MCF 10A (cell line): ENCODE measurements at regions of chr6 and their contacts with region 1.

Region 1: DNA sequence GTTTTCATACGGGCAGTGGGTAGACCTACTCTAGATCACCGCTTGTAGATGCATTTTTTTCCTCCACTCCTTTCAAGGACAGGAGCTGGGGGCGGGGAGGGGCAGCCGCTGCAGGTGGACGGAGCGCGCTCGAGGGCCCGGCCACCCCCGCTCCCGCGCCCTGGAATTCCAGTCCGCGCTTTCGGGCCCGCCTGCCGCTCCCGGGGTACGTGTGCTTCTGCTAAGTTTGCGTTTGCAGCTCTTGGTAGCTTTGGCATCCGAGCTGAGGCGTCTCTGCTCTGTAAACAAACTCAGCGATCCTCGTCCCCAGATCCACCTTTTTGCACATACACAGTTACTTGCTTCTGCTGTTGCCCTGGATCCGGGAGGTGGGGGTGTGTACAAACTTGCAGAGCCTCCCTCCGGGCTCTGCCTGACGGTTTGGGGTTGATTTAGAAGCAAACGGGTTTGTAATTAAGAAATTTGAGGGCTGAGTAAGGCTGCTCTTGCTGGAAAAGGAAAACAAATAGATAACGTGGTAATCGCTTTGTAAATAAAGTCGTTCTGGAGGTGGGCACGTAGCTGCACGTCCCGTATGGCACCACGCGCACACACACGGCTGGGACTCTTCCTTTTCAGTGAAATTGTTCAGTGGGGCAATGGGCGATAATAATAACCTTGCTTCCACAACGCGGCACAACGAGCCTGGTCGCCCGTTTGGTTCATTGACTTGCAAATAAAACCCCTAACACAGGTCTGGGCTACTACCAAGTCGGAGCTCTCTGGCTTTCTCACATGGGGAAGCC is 976 bp upstream of the CITED2 start:
- DNase-seq: peak; percentile 98
- H3K4me3 Mint-ChIP-seq: peak overlapping the region; percentile 97
- H3K27ac Mint-ChIP-seq: peak overlapping the region; percentile 97
- H3K4me1 Mint-ChIP-seq: peaks cover 33% of the 10 kb centered on the region
- H3K27me3 Mint-ChIP-seq: no peaks in the 10 kb centered on the region
- CTCF ChIP-seq: no peak

Region 2: GRCh38 chr6:139533573-139534471 is 158.4 kb after region 1 on chr6:
- CTCF ChIA-PET with region 1: interaction called, 3 read pairs
- POLR2A ChIA-PET with region 1: interaction called, 15 read pairs
- intact Hi-C with region 1: loop called (anchors 5 kb)
- DNase-seq: peak; percentile 70
- H3K4me3 Mint-ChIP-seq: peak overlapping the region; percentile 37
- H3K27ac Mint-ChIP-seq: peak overlapping the region; percentile 79
- H3K4me1 Mint-ChIP-seq: peaks cover 26% of the 10 kb centered on the region
- H3K27me3 Mint-ChIP-seq: no peaks in the 10 kb centered on the region
- CTCF ChIP-seq: no peak

Region 3: GRCh38 chr6:139708337-139709199 is 333.1 kb after region 1 on chr6:
- CTCF ChIA-PET with region 1: interaction called, 4 read pairs
- POLR2A ChIA-PET with region 1: interaction called, 22 read pairs
- intact Hi-C with region 1: no loop called
- DNase-seq: no peak
- H3K4me3 Mint-ChIP-seq: no peak overlapping the region
- H3K27ac Mint-ChIP-seq: no peak overlapping the region
- H3K4me1 Mint-ChIP-seq: peaks cover 18% of the 10 kb centered on the region
- H3K27me3 Mint-ChIP-seq: no peaks in the 10 kb centered on the region
- CTCF ChIP-seq: no peak

Region 4: DNA sequence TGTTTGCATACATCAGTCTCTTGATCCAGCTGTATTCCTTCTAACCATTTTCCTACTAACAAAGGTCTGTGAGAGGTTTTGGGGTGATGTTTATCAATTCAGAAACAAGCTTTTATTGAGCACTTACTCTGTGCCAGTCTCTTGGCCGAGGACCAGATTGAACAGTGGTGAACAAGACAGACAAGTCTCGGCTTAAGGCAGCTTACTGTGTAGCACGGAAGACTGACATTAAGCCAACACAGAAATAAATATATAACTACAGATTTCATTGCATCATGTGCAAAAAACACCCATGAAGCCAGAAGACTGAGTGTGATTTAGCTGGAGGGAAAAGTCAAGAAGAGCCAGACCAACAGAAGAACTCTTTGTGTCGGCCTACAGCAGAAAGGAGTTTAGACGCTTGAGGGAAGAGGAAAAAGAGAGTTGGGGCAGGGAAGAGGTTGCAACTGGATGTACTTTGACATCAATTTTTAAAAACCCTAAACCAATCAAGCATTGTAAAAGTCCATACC is 548.6 kb after region 1 on chr6:
- CTCF ChIA-PET with region 1: interaction called, 6 read pairs
- POLR2A ChIA-PET with region 1: interaction called, 10 read pairs
- intact Hi-C with region 1: no loop called
- DNase-seq: no peak
- H3K4me3 Mint-ChIP-seq: no peak overlapping the region
- H3K27ac Mint-ChIP-seq: no peak overlapping the region
- H3K4me1 Mint-ChIP-seq: no peaks in the 10 kb centered on the region
- H3K27me3 Mint-ChIP-seq: no peaks in the 10 kb centered on the region
- CTCF ChIP-seq: no peak

Region 5: GRCh38 chr6:140174515-140174914 is 799.1 kb after region 1 on chr6:
- CTCF ChIA-PET with region 1: no interaction called
- POLR2A ChIA-PET with region 1: interaction called, 7 read pairs
- intact Hi-C with region 1: loop called (anchors 10 kb)
- DNase-seq: peak; percentile 96
- H3K4me3 Mint-ChIP-seq: no peak overlapping the region
- H3K27ac Mint-ChIP-seq: peak overlapping the region; percentile 27
- H3K4me1 Mint-ChIP-seq: peaks cover 21% of the 10 kb centered on the region
- H3K27me3 Mint-ChIP-seq: no peaks in the 10 kb centered on the region
- CTCF ChIP-seq: no peak

Region 6: DNA sequence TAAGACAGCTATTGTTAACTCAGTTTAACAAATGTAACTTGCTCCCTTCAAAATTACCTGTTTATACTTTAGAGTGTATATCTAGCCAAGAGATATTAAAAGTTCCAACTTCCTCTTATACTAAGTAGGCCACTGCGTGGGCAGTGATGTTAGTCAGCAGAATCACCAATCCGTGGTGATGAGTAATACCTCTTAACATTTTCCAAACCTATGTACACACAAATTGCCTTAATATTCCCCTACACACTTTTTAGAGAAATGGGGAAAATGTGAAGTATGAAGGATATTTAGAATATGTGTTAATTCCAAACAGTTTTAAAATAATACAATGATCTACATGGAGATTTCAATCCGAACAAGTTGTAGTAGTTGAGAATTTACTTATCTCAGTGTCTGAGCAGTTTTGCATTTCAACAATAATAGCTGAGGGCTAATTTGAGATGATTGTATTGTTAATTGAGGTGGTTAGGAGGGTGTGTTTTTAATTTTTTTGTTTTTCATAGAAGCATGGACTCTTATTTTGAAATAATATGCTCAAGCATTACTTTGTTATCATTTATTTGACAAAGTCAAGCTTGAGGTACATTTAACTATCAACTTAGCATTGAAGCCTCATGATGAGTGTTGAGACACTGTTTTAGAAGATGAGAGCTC is 1110.8 kb after region 1 on chr6:
- CTCF ChIA-PET with region 1: no interaction called
- POLR2A ChIA-PET with region 1: interaction called, 3 read pairs
- intact Hi-C with region 1: loop called (anchors 1 kb)
- DNase-seq: peak; percentile 75
- H3K4me3 Mint-ChIP-seq: no peak overlapping the region
- H3K27ac Mint-ChIP-seq: peak overlapping the region; percentile 37
- H3K4me1 Mint-ChIP-seq: peaks cover 24% of the 10 kb centered on the region
- H3K27me3 Mint-ChIP-seq: no peaks in the 10 kb centered on the region
- CTCF ChIP-seq: no peak